ENCODE measurements at regions of chr2 and their contacts with region 1.

Region 1: GRCh38 chr2:27628767-27629709 is at the starts of genes CCDC121 and GPN1:
- DNase-seq: peak; percentile 90
- H3K4me3 Mint-ChIP-seq: no peak within 1 kb of the TSS
- H3K27ac Mint-ChIP-seq: no peak within 1 kb of the TSS
- H3K4me1 Mint-ChIP-seq: peaks cover 14% of the 10 kb centered on the region
- H3K27me3 Mint-ChIP-seq: no peaks in the 10 kb centered on the region
- CTCF ChIP-seq: no peak
- total RNA-seq, gene CCDC121: 5.5 and 6.3 TPM in 2 replicates
- total RNA-seq, gene GPN1: 32.6 and 33.2 TPM in 2 replicates

Region 2: DNA sequence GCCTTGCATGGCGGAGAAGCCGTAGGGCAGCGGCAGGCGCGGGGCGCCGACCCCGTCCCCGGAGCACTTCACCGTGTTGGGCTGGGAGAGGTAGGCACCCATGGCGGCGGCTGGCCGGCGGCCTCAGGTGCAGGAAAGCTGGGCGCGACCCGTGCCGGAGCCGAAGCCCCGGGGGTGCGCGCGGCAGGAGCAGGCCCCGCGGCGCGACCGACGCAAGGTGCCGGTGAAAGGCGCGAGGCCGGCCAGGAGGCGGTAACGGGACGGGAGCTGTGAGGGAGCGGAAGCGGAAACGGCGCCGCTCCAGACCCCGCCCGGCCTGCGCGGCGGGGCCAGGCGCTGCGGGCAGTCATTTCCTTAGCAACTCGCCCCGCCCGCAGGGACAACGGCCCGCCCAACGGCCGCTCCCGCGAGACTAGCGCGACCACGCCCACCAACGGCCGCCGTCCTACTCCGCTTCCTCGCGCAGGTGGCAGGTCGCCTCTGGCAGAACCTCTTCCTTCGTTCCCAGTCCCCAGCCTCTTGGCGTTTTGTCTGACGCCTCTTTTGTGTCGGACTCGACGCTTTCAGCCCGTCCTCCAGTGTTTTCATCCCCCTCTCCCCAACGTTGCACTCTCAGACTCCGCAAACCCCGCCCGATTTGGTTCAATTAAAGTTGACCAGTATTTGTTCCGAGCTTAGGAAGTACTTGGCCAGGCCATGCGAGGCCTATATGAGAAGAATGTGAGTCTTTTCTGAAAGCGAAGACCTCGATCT is 219.5 kb before region 1 on chr2 and contains the start of gene PPM1G:
- CTCF ChIA-PET with region 1: no interaction called
- intact Hi-C with region 1: loop called (anchors 10 kb)
- DNase-seq: peak; percentile 98
- H3K4me3 Mint-ChIP-seq: peak within 1 kb of the TSS; percentile 97
- H3K27ac Mint-ChIP-seq: peak within 1 kb of the TSS; percentile 83
- H3K4me1 Mint-ChIP-seq: peaks cover 26% of the 10 kb centered on the region
- H3K27me3 Mint-ChIP-seq: no peaks in the 10 kb centered on the region
- CTCF ChIP-seq: no peak
- total RNA-seq, gene PPM1G: 118 and 121 TPM in 2 replicates

Region 3: GRCh38 chr2:27489498-27490397 is 139.3 kb before region 1 on chr2 and contains the start of gene IFT172:
- CTCF ChIA-PET with region 1: no interaction called
- intact Hi-C with region 1: loop called (anchors 10 kb)
- DNase-seq: peak; percentile 98
- H3K4me3 Mint-ChIP-seq: peak within 1 kb of the TSS; percentile 80
- H3K27ac Mint-ChIP-seq: peak within 1 kb of the TSS; percentile 85
- H3K4me1 Mint-ChIP-seq: peaks cover 7% of the 10 kb centered on the region
- H3K27me3 Mint-ChIP-seq: no peaks in the 10 kb centered on the region
- CTCF ChIP-seq: no peak
- total RNA-seq, gene IFT172: 37.5 and 41.7 TPM in 2 replicates

Region 4: GRCh38 chr2:27683390-27684071 is 54.5 kb after region 1 on chr2:
- CTCF ChIA-PET with region 1: interaction called, 14 read pairs
- intact Hi-C with region 1: no loop called
- DNase-seq: peak; percentile 88
- H3K4me3 Mint-ChIP-seq: peak overlapping the region; percentile 9
- H3K27ac Mint-ChIP-seq: peak overlapping the region; percentile 92
- H3K4me1 Mint-ChIP-seq: peaks cover 40% of the 10 kb centered on the region
- H3K27me3 Mint-ChIP-seq: no peaks in the 10 kb centered on the region
- CTCF ChIP-seq: peak; percentile 96

Region 5: DNA sequence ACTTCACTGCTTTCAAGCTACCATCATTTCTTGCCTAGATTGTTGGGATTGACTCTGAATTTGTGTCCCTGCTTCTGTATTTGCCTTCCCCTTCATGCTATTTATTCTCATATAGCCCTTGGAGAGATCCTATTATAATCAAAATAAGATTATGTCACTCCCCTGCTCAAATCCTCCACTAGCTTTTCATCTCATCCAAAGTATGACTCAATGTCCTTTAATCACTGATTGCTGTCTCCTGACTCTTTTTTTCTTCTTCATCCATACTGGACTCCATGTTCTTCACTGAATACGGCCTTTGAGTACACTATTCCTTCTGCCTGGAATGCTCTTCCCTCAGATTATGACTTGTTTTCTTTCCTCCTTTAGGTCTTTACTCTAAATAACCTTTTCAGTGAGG is 256.2 kb after region 1 on chr2:
- CTCF ChIA-PET with region 1: no interaction called
- intact Hi-C with region 1: no loop called
- DNase-seq: no peak
- H3K4me3 Mint-ChIP-seq: no peak overlapping the region
- H3K27ac Mint-ChIP-seq: peak overlapping the region; percentile 4
- H3K4me1 Mint-ChIP-seq: peaks cover 47% of the 10 kb centered on the region
- H3K27me3 Mint-ChIP-seq: no peaks in the 10 kb centered on the region
- CTCF ChIP-seq: no peak

Measured in Calu3 (cell line).